Activated CD4-positive, alpha-beta memory T cell treated with anti-CD3 and anti-CD28 coated beads for 36 hours (primary cell): ENCODE measurements at regions of chr12 and their contacts with region 1.

Region 1: DNA sequence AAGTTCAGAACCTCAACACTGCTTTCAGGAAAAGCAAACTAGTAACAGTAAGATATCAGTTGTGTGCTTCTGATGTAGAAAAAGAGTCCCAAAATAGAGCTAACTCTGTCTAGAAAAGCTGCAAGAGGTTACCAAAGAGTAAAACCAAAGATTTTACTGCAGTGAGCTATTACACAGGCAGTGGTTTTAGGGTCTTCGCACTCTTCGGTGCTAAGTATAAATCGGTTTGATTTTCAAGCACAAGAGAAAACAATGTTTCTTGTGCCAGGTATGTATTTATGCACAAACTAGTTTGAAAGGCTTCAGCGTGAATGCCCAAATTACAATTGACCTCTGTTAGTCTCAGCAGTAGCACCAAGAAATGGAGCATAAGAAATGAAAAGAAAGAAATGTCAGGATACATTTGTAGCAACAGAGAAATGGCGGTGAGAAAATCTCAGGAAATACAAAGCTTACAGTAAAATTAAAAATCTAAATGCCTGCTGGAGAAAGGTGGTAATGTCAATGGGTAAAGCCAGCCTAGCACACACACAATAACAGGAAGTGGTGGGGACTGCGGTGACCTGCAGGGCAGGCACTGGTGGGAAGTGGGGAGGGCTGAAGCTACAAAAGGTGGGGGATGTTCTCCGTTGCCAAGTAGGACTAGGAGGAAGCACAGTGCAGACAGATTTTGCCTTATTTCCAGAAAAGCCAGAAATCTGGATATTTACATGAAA is 18.0 kb upstream of the DYRK2 start:
- DNase-seq: peak; percentile 92
- H3K4me3 Mint-ChIP-seq: peak overlapping the region; percentile 58
- H3K27ac Mint-ChIP-seq: peak overlapping the region; percentile 81
- H3K4me1 Mint-ChIP-seq: peaks cover 68% of the 10 kb centered on the region
- H3K27me3 Mint-ChIP-seq: peaks cover 2% of the 10 kb centered on the region

Region 2: GRCh38 chr12:67452119-67452805 is 178.3 kb before region 1 on chr12:
- CTCF ChIA-PET with region 1: no interaction called
- POLR2A ChIA-PET with region 1: no interaction called
- intact Hi-C with region 1: loop called (anchors 5 kb)
- DNase-seq: peak; percentile 42
- H3K4me3 Mint-ChIP-seq: peak overlapping the region; percentile 1
- H3K27ac Mint-ChIP-seq: no peak overlapping the region
- H3K4me1 Mint-ChIP-seq: peaks cover 48% of the 10 kb centered on the region
- H3K27me3 Mint-ChIP-seq: peaks cover 4% of the 10 kb centered on the region

Region 3: GRCh38 chr12:67482751-67483671 is 147.5 kb before region 1 on chr12:
- CTCF ChIA-PET with region 1: no interaction called
- POLR2A ChIA-PET with region 1: no interaction called
- intact Hi-C with region 1: loop called (anchors 5 kb)
- DNase-seq: peak; percentile 86
- H3K4me3 Mint-ChIP-seq: no peak overlapping the region
- H3K27ac Mint-ChIP-seq: peak overlapping the region; percentile 5
- H3K4me1 Mint-ChIP-seq: peaks cover 41% of the 10 kb centered on the region
- H3K27me3 Mint-ChIP-seq: no peaks in the 10 kb centered on the region

Region 4: GRCh38 chr12:67578976-67579661 is 51.4 kb before region 1 on chr12:
- CTCF ChIA-PET with region 1: no interaction called
- POLR2A ChIA-PET with region 1: no interaction called
- intact Hi-C with region 1: loop called (anchors 2 kb)
- DNase-seq: peak; percentile 22
- H3K4me3 Mint-ChIP-seq: no peak overlapping the region
- H3K27ac Mint-ChIP-seq: peak overlapping the region; percentile 14
- H3K4me1 Mint-ChIP-seq: peaks cover 36% of the 10 kb centered on the region
- H3K27me3 Mint-ChIP-seq: no peaks in the 10 kb centered on the region

Region 5: DNA sequence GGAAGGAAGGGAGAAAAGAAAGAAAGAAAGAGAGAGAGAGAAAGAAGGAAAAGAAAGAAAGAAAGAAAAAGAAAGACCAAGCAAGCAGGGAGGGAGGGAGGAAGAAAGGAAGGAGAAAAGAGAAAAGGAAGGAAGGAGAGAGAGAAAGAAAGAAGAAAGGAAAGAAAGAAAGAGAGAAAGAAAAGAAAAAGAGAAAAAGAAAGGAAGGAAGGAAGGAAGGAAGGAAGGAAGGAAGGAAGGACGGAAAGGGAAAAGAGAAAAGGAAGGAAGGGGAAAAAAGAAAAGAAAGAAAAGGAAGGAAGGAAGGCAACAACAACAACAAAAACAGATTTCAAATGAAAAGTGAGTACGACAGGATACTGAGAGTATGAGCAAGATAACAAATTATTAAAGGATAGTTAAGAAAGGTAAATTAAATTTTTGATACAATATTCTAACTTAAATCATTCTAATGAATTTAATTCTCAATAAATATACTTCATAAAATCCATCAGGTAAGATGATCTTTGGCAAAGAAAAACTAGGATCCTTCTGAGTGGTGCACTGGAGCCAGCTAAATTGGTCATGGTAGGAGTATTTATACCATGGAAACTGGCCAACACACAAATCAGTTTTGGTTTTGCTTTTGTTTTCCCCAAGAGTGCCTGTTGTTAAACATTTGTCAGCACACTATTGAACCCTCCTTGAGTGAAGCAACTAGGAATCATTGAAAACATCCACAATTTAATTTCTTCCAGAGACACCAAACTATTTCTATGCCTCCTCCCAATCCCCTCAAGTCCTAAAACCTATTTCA is 38.1 kb before region 1 on chr12:
- CTCF ChIA-PET with region 1: interaction called, 5 read pairs
- POLR2A ChIA-PET with region 1: no interaction called
- intact Hi-C with region 1: loop called (anchors 2 kb)
- DNase-seq: no peak
- H3K4me3 Mint-ChIP-seq: no peak overlapping the region
- H3K27ac Mint-ChIP-seq: peak overlapping the region; percentile 67
- H3K4me1 Mint-ChIP-seq: peaks cover 47% of the 10 kb centered on the region
- H3K27me3 Mint-ChIP-seq: no peaks in the 10 kb centered on the region

Region 6: DNA sequence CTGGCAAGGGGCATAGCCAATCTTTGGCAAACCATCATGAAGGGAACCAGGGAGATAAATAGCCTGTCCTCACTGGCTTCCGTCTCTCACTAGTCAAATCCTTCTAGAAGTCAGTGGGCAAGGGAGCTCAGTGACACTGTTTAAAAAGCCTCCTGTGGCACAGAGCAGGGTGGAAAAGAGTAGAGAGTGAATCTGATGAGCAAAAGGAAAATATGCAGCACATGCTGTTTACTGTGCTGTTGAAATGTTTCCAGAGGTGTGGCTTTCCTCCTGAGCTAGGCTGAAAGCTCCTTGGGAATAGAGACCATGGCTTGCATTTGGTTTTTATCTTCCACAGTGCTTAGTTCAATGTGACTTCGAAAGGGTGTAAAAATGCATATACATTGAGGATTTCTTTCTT is 10.3 kb after region 1 on chr12:
- CTCF ChIA-PET with region 1: interaction called, 3 read pairs
- POLR2A ChIA-PET with region 1: interaction called, 3 read pairs
- intact Hi-C with region 1: loop called (anchors 1 kb)
- DNase-seq: no peak
- H3K4me3 Mint-ChIP-seq: no peak overlapping the region
- H3K27ac Mint-ChIP-seq: no peak overlapping the region
- H3K4me1 Mint-ChIP-seq: peaks cover 8% of the 10 kb centered on the region
- H3K27me3 Mint-ChIP-seq: no peaks in the 10 kb centered on the region

Region 7: GRCh38 chr12:67804168-67804567 is 173.6 kb after region 1 on chr12:
- CTCF ChIA-PET with region 1: no interaction called
- POLR2A ChIA-PET with region 1: no interaction called
- intact Hi-C with region 1: loop called (anchors 2 kb)
- DNase-seq: peak; percentile 80
- H3K4me3 Mint-ChIP-seq: no peak overlapping the region
- H3K27ac Mint-ChIP-seq: no peak overlapping the region
- H3K4me1 Mint-ChIP-seq: peaks cover 31% of the 10 kb centered on the region
- H3K27me3 Mint-ChIP-seq: no peaks in the 10 kb centered on the region

Region 8: GRCh38 chr12:67981287-67982162 is 351.0 kb after region 1 on chr12:
- CTCF ChIA-PET with region 1: no interaction called
- POLR2A ChIA-PET with region 1: no interaction called
- intact Hi-C with region 1: no loop called
- DNase-seq: peak; percentile 22
- H3K4me3 Mint-ChIP-seq: no peak overlapping the region
- H3K27ac Mint-ChIP-seq: no peak overlapping the region
- H3K4me1 Mint-ChIP-seq: peaks cover 9% of the 10 kb centered on the region
- H3K27me3 Mint-ChIP-seq: peaks cover 5% of the 10 kb centered on the region